ENCODE measurements at regions of chr2 and their contacts with region 1.

Region 1: DNA sequence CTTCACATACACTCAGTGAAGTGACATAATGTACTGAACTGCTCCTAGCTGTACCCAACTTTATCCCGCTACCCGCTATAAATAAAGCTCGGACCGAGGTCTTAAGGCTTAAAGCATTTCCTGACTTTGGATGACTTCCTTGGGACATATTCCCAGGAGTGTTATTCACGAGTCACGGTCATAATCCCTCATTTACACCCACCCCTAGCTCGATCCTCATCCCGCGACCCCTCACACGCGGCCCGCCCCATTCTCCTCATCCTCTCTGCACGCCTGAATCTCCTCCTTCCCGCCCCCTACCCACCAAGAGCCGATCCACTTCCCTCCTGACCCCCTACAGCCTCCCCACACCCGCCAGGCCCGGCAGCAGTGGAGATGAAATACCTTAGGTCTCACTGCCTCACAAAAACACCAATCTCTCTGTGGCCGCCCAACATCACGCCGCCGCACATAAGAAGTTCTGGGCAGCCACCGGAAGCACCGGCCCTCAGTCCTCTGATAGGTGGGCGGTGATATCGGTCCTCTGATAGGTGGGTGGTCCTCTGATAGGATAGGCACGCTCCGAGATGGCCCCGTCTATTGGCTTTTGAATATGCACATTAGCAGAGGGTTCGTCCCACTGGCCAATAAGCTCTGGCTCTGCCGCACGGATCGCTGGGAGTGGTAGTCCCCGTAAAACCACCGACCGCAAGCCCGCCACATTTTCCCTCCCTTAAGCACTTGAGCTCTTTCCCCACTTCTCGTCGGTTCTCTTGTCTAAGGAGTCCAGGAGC is at the start of gene WDCP:
- DNase-seq: peak; percentile 91 to 98 (median 95)
- H3K4me3 ChIP-seq: peak within 1 kb of the TSS; percentile 63 to 97 (median 63)
- H3K4me3 Mint-ChIP-seq: peak within 1 kb of the TSS in 1 of 2 donors; percentile 96
- H3K27ac ChIP-seq: peak within 1 kb of the TSS in 1 of 2 donors; percentile 66
- H3K27ac Mint-ChIP-seq: peak within 1 kb of the TSS in 6 of 7 donors; percentile 23 to 90 (median 72)
- H3K4me1 ChIP-seq: peaks cover 24 to 32% of the 10 kb centered on the region in 2 donors
- H3K4me1 Mint-ChIP-seq: peaks cover 24% of the 10 kb centered on the region
- H3K27me3 ChIP-seq: peaks cover 11 to 21% of the 10 kb centered on the region in 2 donors
- H3K27me3 Mint-ChIP-seq: peaks cover 11 to 22% (median 19%) of the 10 kb centered on the region in 3 donors
- CTCF ChIP-seq: no peak
- polyA plus RNA-seq, gene WDCP: 0.43 to 1.3 (median 0.69) TPM

Region 2: DNA sequence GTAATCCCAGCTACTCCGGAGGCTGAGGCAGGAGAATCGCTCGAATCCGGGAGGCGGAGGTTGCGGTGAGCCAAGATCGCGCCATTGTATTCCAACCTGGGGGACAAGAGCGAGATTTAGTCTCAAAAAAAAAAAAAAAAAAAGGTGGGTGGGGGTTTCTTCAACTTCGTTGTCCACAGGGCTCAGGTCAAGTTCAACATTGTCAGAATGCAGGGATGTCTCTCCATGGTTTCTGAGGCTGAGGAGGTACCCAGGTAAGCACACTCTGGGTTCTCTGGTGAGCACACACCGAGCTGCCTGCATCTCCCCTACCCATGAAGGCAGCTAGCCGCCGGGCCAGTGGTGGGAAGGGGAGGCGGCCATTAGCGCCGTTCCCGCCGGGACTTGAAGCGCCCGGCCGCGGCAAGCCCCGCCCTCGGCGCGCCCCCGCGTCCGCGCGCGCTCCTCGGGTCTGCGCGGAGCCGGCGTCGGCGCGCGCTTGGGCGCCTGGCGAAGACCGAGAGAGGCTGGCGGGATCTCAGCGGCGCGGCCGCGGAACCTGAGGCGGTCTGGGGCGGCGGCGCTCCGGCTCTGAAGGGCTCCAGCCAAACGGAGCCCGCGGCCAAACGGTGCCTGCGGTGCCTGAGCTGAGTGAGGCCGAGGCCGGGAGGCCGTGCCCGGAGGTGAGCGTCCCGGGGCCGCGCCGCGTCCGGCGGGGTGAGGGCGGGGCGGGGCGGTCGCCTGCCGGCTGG is 107.0 kb before region 1 on chr2 and contains the start of gene UBXN2A:
- intact Hi-C with region 1: loop called in 1 of 2 experiments (anchors 10 kb)
- DNase-seq: peak; percentile 66 to 78 (median 75)
- H3K4me3 ChIP-seq: peak within 1 kb of the TSS; percentile 88 to 95 (median 91)
- H3K4me3 Mint-ChIP-seq: peak within 1 kb of the TSS; percentile 97 to 98
- H3K27ac ChIP-seq: peak within 1 kb of the TSS; percentile 31 to 78
- H3K27ac Mint-ChIP-seq: peak within 1 kb of the TSS; percentile 83 to 95 (median 90)
- H3K4me1 ChIP-seq: peaks cover 22 to 28% of the 10 kb centered on the region in 2 donors
- H3K4me1 Mint-ChIP-seq: peaks cover 26% of the 10 kb centered on the region
- H3K27me3 ChIP-seq: no peaks in the 10 kb centered on the region
- H3K27me3 Mint-ChIP-seq: peaks cover 0 to 2% (median 0%) of the 10 kb centered on the region in 3 donors
- CTCF ChIP-seq: no peak
- polyA plus RNA-seq, gene UBXN2A: 2.0 to 6.8 (median 5.5) TPM

Region 3: DNA sequence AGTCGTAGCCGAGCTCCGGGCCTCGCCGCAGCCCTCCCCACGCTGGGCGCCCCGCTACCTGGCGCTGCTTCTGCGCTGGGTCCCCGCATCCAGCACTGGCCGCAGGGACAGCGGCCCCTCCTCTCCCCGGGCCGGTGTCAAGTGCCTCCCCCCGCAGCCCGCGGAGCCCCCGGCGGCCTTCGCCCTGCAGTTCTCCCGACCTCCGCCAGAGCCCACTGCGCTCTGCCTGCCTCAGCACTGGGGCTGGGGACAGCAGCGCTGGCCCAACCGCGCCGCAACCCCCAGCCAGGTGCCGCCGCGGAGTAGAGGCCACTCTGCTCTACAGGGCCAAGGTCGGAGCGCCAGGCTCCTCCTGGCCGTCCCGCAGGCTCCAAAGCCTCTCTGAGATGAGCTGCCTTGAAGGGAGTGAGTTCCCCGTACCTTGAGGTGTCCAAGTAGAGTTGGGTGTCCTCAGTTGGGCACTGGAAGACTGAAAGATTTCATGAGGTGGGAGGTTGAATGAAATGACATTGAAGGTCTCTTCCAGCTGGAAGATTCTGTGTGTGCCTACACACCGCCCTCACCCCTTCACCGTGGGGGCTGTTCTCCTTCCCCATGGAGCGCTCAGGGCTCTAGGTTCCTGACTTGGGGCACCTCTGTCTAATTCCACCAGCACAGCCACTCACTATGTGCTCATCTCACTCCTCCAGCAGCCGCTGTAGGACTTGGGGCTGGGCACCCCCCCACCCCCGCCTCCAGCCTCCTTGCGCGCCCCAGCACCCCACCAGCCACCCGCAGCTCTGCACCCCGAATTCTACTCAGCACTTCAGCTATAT is 1295.5 kb after region 1 on chr2:
- intact Hi-C with region 1: no loop called
- DNase-seq: peak; percentile 70 to 73 (median 72)
- H3K4me3 ChIP-seq: peak overlapping the region; percentile 18 to 78 (median 52)
- H3K4me3 Mint-ChIP-seq: peak overlapping the region; percentile 76 to 80
- H3K27ac ChIP-seq: no peak overlapping the region
- H3K27ac Mint-ChIP-seq: peak overlapping the region in 1 of 7 donors; percentile 37
- H3K4me1 ChIP-seq: peaks cover 7 to 27% of the 10 kb centered on the region in 2 donors
- H3K4me1 Mint-ChIP-seq: peaks cover 24% of the 10 kb centered on the region
- H3K27me3 ChIP-seq: peaks cover 0 to 7% of the 10 kb centered on the region in 2 donors
- H3K27me3 Mint-ChIP-seq: peaks cover 9 to 22% (median 14%) of the 10 kb centered on the region in 3 donors
- CTCF ChIP-seq: peak; percentile 99